ENCODE measurements at regions of chr2 and their contacts with region 1.

Region 1: GRCh38 chr2:231925303-231926179 is 655 bp downstream of the NPPC start:
- DNase-seq: peak; percentile 66
- H3K4me3 ChIP-seq: peak overlapping the region; percentile 32 to 53 (median 50)
- H3K27ac ChIP-seq: no peak overlapping the region
- H3K4me1 ChIP-seq: peaks cover 20% of the 10 kb centered on the region
- H3K27me3 ChIP-seq: peaks cover 13% of the 10 kb centered on the region
- CTCF ChIP-seq: peak; percentile 59 to 72

Region 2: GRCh38 chr2:231987124-231987727 is 61.7 kb after region 1 on chr2:
- CTCF ChIA-PET with region 1: no interaction called
- dilution Hi-C with region 1: no loop called
- in situ Hi-C with region 1: no loop called
- intact Hi-C with region 1: no loop called
- DNase-seq: no peak
- H3K4me3 ChIP-seq: no peak overlapping the region
- H3K27ac ChIP-seq: no peak overlapping the region
- H3K4me1 ChIP-seq: peaks cover 15% of the 10 kb centered on the region
- H3K27me3 ChIP-seq: no peaks in the 10 kb centered on the region
- CTCF ChIP-seq: no peak

Region 3: DNA sequence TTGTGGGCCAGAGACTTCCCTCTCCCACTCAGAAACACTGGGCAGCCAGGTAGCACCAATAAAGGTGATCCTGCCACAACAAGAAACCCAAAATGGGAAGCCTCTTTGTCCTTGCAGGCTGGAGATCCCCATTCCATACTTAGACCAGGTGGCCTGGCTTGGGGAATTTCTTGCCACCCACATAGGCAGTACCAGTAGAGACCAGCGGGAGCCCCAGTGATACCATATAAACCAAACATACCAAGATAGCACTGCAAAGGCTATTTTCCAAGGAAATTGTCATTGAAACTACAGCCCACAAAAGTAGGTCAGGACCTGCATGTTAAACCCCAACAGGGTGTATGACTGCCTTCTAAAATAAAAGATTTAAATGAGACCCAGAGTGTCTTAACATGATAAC is 207.5 kb after region 1 on chr2:
- CTCF ChIA-PET with region 1: no interaction called
- dilution Hi-C with region 1: no loop called
- in situ Hi-C with region 1: loop called in 1 of 2 experiments (anchors 10 kb)
- intact Hi-C with region 1: no loop called
- DNase-seq: peak; percentile 22
- H3K4me3 ChIP-seq: no peak overlapping the region
- H3K27ac ChIP-seq: no peak overlapping the region
- H3K4me1 ChIP-seq: no peaks in the 10 kb centered on the region
- H3K27me3 ChIP-seq: no peaks in the 10 kb centered on the region
- CTCF ChIP-seq: peak; percentile 23 to 32

Region 4: DNA sequence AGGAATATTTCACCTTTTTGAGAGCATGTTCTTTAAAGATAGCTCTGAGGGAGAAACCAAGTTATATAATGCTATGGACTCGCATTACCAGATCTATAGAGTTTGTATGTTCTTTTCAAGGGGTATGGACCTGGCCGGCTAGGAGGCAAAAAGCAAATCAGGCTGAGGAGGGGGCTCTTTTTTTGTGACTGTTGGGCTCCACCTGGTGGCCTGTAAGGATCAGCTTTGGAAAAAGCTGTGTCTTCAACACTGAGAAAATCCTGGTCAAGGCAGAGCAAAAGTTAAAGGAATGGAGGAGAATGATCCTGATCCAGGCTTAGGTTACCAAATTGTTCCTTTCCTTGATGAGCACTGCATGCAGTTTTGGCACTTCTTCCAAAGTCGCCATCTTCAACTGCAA is 216.5 kb after region 1 on chr2:
- CTCF ChIA-PET with region 1: no interaction called
- dilution Hi-C with region 1: no loop called
- in situ Hi-C with region 1: loop called in 1 of 2 experiments (anchors 10 kb)
- intact Hi-C with region 1: loop called (anchors 1 kb)
- DNase-seq: peak; percentile 14
- H3K4me3 ChIP-seq: no peak overlapping the region
- H3K27ac ChIP-seq: no peak overlapping the region
- H3K4me1 ChIP-seq: no peaks in the 10 kb centered on the region
- H3K27me3 ChIP-seq: no peaks in the 10 kb centered on the region
- CTCF ChIP-seq: peak; percentile 50 to 74

Region 5: GRCh38 chr2:232230557-232230956 is 305.0 kb after region 1 on chr2:
- CTCF ChIA-PET with region 1: interaction called, 5 read pairs
- dilution Hi-C with region 1: no loop called
- in situ Hi-C with region 1: no loop called
- intact Hi-C with region 1: loop called (anchors 1 kb)
- DNase-seq: no peak
- H3K4me3 ChIP-seq: no peak overlapping the region
- H3K27ac ChIP-seq: no peak overlapping the region
- H3K4me1 ChIP-seq: peaks cover 1% of the 10 kb centered on the region
- H3K27me3 ChIP-seq: no peaks in the 10 kb centered on the region
- CTCF ChIP-seq: peak; percentile 22 to 33

Region 6: GRCh38 chr2:232292395-232293154 is 367.0 kb after region 1 on chr2:
- CTCF ChIA-PET with region 1: no interaction called
- dilution Hi-C with region 1: no loop called
- in situ Hi-C with region 1: no loop called
- intact Hi-C with region 1: loop called (anchors 1 kb)
- DNase-seq: peak; percentile 45
- H3K4me3 ChIP-seq: no peak overlapping the region
- H3K27ac ChIP-seq: no peak overlapping the region
- H3K4me1 ChIP-seq: peaks cover 9% of the 10 kb centered on the region
- H3K27me3 ChIP-seq: no peaks in the 10 kb centered on the region
- CTCF ChIP-seq: peak; percentile 79 to 84

Region 7: DNA sequence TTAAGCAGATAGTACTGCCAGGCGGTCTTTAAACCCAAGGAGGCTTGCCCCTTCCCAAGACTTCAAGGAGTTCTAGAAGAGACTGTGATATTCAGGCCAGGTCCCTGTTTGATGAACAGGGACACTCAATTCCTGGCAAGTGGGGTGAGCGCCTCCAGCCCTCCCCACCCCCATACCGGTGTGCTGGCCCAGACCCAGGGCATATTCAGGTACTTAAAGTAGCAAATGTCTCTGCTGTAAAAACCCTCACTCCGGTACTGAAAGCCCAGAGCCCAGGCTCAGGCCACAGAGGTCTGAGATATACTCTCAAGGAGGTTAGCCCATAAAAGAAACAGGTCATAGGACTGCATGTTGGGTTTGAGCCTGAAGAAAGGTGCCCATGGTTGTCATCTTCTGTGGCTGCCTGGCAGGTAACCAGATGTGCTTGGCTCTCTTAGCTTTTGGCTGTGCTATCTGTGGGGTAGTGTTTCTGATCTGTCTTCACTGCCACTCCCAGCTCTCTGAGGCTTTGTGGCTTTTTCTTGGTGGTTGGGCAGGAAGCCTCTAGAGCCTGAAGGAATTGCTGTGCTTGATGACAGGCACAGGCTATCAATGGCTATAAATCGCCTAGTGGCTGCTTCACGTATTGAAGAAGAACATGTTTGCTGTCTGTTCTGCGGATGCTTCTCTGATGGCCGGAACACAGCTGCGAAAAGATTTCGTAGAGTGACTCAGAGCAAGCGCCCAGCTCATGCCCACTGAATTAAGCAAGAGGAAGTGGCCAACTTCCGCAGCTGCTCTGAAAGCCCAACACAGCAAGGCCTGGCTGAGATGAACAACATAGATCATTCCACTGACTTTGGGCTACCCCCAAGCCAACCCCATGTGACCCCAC is 389.7 kb after region 1 on chr2:
- CTCF ChIA-PET with region 1: no interaction called
- dilution Hi-C with region 1: no loop called
- in situ Hi-C with region 1: no loop called
- intact Hi-C with region 1: no loop called
- DNase-seq: peak; percentile 96
- H3K4me3 ChIP-seq: no peak overlapping the region
- H3K27ac ChIP-seq: peak overlapping the region; percentile 73
- H3K4me1 ChIP-seq: peaks cover 40% of the 10 kb centered on the region
- H3K27me3 ChIP-seq: no peaks in the 10 kb centered on the region
- CTCF ChIP-seq: peak; percentile 49 to 54